ENCODE measurements at regions of chr20 and their contacts with region 1.

Region 1: DNA sequence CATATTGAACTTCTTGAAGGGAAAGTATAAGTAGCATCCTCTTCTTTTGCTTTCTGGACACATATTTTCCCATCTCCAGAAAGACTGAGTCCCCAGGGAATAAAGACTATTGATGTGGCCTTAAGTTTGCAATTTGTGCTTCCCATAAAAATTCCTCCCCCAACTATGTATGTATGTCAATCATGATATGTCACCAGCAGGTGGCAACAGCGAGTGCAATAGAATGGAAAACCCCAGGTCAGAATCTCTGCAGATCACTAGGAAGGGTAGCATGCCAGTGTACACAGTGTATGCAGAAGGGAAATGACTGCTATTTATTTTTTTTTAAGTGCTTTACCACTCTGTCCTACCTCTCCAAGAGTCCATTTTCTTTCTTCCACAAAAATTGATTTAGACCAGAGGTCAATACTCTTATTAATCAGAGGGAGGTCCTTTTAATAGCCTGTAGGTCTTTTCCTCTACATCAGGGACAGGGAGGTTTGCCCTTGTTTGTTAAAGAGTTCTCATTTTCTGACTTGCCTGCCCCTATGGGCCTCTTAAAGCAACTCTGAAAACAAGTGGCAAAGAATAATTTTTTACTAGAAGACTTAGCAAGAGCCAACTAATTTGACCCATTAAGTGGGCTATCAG is 61.4 kb downstream of the BMP2 start:
- DNase-seq: peak; percentile 12 to 48 (median 30)
- H3K4me3 ChIP-seq: no peak overlapping the region
- H3K27ac ChIP-seq: no peak overlapping the region
- H3K4me1 ChIP-seq: no peaks in the 10 kb centered on the region
- H3K27me3 ChIP-seq: no peaks in the 10 kb centered on the region
- CTCF ChIP-seq: no peak
- EP300 ChIP-seq: no peak
- POLR2A ChIP-seq: no peak

Region 2: GRCh38 chr20:6623989-6624388 is 204.9 kb before region 1 on chr20:
- intact Hi-C with region 1: loop called in 1 of 4 experiments (anchors 10 kb)
- DNase-seq: no peak
- H3K4me3 ChIP-seq: no peak overlapping the region
- H3K27ac ChIP-seq: no peak overlapping the region
- H3K4me1 ChIP-seq: no peaks in the 10 kb centered on the region
- H3K27me3 ChIP-seq: no peaks in the 10 kb centered on the region
- CTCF ChIP-seq: no peak
- EP300 ChIP-seq: no peak
- POLR2A ChIP-seq: no peak

Region 3: DNA sequence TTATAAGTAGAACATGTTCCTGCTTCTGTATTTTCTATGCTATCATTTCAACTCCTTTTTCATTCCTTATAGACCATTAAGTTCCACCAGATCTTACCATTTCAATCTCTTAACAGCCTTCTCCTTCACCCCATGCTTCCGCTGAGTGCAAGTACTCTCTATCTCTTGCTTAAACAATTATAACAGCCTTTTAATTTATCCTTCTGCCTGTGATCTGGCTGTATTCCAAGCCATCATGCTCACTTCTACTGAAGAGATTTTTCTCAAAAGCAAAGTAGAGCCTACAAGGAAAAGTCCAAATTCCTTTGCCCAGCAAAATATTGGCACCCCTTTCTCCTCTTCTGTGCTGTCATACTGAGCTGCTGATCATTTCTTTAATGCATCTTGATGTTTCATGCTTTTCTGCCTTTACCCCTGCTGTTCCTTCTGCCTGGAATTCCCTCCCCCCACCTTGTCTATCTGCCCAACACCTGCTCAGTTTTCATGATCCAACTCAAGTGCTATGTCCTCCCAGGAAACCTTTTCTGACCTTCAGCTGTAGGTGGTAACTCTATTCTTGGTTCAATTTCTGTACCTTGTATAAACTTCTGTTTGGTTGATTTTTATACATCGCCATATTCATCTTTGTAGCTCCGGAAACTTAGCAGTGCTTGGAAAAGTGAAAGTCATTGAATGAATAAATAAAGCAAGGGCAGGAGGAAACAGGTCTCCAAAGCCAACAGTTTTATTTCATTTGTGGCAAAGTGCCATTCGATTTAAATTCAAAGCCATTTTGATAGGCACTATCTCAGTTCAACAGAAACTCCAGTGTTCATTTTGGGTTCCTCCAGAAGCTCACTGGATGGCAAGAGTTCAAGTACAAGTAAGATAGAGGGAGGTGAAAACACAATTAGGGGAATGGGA is 72.0 kb before region 1 on chr20:
- intact Hi-C with region 1: no loop called
- DNase-seq: no peak
- H3K4me3 ChIP-seq: no peak overlapping the region
- H3K27ac ChIP-seq: no peak overlapping the region
- H3K4me1 ChIP-seq: no peaks in the 10 kb centered on the region
- H3K27me3 ChIP-seq: no peaks in the 10 kb centered on the region
- CTCF ChIP-seq: no peak
- EP300 ChIP-seq: no peak
- POLR2A ChIP-seq: no peak

Region 4: DNA sequence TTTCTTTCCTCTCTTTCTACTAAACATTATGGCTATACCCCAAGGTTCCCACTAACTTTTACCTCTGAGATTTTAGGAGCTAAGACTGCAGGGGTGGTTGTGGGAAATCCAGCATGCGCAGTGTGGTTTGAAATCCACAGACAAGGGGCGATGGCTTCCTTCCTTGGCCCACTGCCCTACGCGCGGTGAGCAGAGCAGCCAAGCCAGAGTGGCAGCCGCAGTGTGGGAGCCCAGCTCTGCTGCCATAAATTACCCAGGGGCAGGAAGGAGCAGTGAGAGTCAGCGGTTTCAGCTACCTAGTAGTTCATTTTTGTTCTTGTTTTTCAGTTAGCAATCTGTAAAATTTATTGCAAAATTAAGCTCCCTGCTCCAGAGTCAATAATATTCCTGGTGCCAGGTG is 40.0 kb after region 1 on chr20:
- intact Hi-C with region 1: no loop called
- DNase-seq: peak in 2 of 5 donors; percentile 13 to 38
- H3K4me3 ChIP-seq: no peak overlapping the region
- H3K27ac ChIP-seq: no peak overlapping the region
- H3K4me1 ChIP-seq: peaks cover 12% of the 10 kb centered on the region
- H3K27me3 ChIP-seq: no peaks in the 10 kb centered on the region
- CTCF ChIP-seq: no peak
- EP300 ChIP-seq: no peak
- POLR2A ChIP-seq: no peak

Measured in ovary (tissue), 10 donors.